Left ventricle myocardium inferior (tissue), 1 donor: ENCODE measurements at regions of chr1 and their contacts with region 1.

Region 1: DNA sequence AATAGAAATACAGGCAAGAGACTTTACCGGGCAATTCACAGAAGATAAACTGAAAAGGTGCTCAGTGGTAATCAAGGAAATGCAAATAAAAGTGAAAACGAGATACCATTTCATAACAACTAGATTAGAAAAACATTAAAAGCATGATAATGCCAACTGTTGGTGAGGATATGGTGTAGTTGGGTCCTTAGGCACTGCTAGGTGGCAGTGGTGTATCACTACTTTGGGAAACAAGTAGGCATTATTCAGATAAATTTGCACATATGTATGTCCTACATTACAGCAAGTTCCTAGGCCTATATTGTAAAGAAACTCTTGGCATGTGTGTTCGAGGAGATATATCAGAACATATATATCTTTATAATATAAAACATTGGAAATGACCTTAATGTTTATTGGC is 31.0 kb downstream of the AZIN2 start:
- DNase-seq: no peak
- H3K4me3 ChIP-seq: no peak overlapping the region
- H3K27ac ChIP-seq: no peak overlapping the region
- H3K4me1 ChIP-seq: no peaks in the 10 kb centered on the region
- H3K27me3 ChIP-seq: no peaks in the 10 kb centered on the region
- CTCF ChIP-seq: peak; percentile 31

Region 2: DNA sequence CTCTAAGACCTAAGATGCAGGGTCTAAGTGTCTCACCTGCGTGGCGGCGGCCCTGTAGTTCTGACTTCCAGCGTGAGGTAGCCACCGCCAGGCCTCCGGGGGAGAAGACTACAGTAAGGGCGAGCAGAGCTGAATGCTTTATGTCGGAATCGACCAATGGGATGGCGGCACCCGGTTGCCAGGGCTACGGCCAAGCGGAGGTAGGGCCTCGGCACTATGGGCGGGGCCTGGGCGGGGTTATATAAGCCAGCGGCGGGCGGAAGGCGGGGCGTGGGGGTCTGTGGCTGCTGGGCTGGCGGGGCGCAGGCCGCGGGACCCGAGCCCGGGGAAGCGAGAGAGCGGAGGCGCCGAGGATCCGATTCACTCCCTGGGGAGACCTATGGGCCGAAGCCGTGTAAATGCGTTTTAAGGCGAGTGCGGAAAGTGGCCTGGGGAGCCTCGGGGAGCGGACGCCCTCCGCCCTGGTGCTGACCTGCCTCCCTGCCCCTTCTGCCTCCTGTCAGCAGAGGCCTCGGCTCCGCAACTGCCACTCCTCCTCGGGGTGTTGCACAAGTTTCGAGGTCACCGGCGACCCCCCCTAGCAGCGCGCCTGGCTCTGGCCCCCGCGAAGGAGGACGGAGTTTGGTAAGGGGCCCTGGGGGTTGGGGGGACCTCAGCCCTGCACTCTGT is 31.0 kb before region 1 on chr1 and contains the start of gene AZIN2:
- intact Hi-C with region 1: no loop called
- DNase-seq: peak; percentile 98
- H3K4me3 ChIP-seq: peak within 1 kb of the TSS; percentile 76
- H3K27ac ChIP-seq: peak within 1 kb of the TSS; percentile 58
- H3K4me1 ChIP-seq: peaks cover 21% of the 10 kb centered on the region
- H3K27me3 ChIP-seq: no peaks in the 10 kb centered on the region
- CTCF ChIP-seq: no peak
- total RNA-seq, gene AZIN2: 2.8 TPM

Region 3: DNA sequence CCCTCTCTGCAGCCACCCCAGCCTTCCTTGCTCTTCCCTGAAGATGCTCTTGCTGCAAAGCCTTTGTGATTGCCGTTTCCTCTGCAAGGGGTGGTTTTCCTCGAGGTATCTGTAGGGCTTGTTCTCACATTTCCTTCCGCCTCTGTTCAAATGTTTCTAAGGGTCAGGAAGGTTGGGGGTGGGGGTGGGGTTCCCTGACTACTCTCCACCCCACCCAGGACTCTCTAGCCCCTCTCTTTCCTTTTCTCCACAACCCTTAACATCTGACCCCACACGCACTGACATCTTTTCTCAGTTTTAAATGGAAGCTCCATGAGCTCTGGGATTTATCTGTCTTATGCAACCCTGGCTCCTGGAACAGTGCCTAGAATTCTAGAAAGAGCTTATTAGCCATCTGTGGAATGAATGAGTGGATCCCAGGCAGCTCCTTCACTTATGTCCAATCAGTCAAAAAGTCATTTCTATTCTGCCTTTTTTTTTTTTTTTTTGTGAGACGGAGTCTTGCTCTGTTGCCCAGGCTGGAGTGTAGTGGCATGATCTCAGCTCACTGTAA is 117.0 kb after region 1 on chr1:
- intact Hi-C with region 1: no loop called
- DNase-seq: no peak
- H3K4me3 ChIP-seq: no peak overlapping the region
- H3K27ac ChIP-seq: peak overlapping the region; percentile 56
- H3K4me1 ChIP-seq: peaks cover 22% of the 10 kb centered on the region
- H3K27me3 ChIP-seq: no peaks in the 10 kb centered on the region
- CTCF ChIP-seq: no peak

Region 4: GRCh38 chr1:33616773-33617172 is 504.8 kb after region 1 on chr1:
- intact Hi-C with region 1: loop called (anchors 10 kb)
- DNase-seq: no peak
- H3K4me3 ChIP-seq: no peak overlapping the region
- H3K27ac ChIP-seq: no peak overlapping the region
- H3K4me1 ChIP-seq: peaks cover 11% of the 10 kb centered on the region
- H3K27me3 ChIP-seq: peaks cover 15% of the 10 kb centered on the region
- CTCF ChIP-seq: no peak